ENCODE measurements at regions of chr1 and their contacts with region 1.

Region 1: DNA sequence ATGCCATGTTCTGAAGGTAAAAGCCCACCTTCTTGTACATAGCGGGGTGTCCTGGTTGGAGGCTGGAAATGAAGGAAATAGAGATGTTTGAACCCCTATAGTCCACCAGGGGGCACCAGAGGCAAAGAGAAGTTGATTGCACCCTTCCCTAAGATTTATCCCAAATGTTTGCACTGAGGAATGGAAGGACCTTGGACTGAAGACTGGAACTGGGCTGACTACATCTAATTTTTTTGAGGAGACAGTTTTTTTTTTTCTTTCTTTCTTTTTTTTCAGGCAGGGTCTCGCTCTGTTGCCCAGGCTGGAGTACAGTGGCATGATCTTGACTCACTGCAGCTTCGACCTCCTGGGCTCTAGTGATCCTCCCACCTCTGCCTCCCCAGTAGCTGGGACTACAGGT is 55.3 kb upstream of the EIF4G3 start:
- DNase-seq: peak in 1 of 2 experiments; percentile 27
- H3K4me3 ChIP-seq: no peak overlapping the region
- H3K27ac ChIP-seq: no peak overlapping the region
- H3K4me1 ChIP-seq: no peaks in the 10 kb centered on the region
- H3K27me3 ChIP-seq: no peaks in the 10 kb centered on the region
- CTCF ChIP-seq: peak; percentile 79

Region 2: DNA sequence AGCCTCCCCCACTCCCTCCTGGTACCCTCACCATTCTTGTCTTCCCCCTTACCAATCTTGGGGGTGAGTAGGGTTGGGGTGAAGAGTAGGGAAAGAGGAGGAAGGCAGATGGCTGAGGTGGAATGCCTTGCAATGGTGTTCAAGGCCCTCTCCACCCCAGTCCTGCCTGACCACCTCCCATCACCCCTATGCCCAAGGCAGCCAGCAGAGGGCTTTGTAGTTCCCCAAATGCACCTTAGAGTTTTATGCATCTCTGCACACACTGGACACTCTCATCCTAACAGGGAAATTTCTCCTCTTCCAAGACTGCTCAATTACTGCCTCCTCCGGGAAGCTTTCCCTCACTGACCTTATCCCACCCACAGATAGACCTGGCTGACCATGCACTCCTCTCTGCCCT is 529.6 kb before region 1 on chr1:
- CTCF ChIA-PET with region 1: no interaction called
- POLR2A ChIA-PET with region 1: no interaction called
- intact Hi-C with region 1: no loop called
- DNase-seq: no peak
- H3K4me3 ChIP-seq: no peak overlapping the region
- H3K27ac ChIP-seq: no peak overlapping the region
- H3K4me1 ChIP-seq: 0 out of 2 replicates have a peak, but pooled peaks cover under 1% of the 10 kb centered on the region
- H3K27me3 ChIP-seq: no peaks in the 10 kb centered on the region
- CTCF ChIP-seq: peak; percentile 36; the same call in 1 of the 2 replicates

Region 3: DNA sequence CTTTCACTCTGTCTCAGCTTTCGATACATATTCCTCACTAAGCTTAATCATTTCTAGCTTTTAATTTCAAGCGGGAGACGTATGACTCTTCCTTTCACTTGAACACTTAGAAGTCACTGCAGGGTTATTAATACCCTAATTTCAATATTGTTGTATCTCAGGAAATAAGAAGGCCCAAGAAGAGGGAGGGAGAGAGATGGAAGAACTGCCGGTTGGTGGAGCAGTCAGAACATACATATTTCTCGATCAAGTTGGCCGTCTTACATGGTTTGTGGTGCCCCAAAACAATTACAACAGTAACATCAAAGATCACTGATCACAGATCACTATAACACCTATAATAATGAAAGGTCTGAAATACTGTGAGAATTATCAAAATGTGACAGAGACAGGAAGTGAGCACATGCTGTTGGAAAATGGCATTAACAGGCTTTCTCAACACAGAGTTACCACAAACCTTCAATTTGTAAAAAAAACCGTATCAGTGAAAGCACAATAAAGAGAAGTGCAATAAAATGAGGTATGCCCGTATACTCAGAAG is 299.5 kb before region 1 on chr1:
- CTCF ChIA-PET with region 1: no interaction called
- POLR2A ChIA-PET with region 1: no interaction called
- intact Hi-C with region 1: no loop called
- DNase-seq: no peak
- H3K4me3 ChIP-seq: no peak overlapping the region
- H3K27ac ChIP-seq: no peak overlapping the region
- H3K4me1 ChIP-seq: no peaks in the 10 kb centered on the region
- H3K27me3 ChIP-seq: no peaks in the 10 kb centered on the region
- CTCF ChIP-seq: no peak

Region 4: GRCh38 chr1:21255278-21255942 is 23.4 kb after region 1 on chr1:
- CTCF ChIA-PET with region 1: interaction called, 11 read pairs
- POLR2A ChIA-PET with region 1: no interaction called
- intact Hi-C with region 1: no loop called
- DNase-seq: peak; percentile 42 to 75
- H3K4me3 ChIP-seq: no peak overlapping the region
- H3K27ac ChIP-seq: no peak overlapping the region
- H3K4me1 ChIP-seq: peaks cover 20% of the 10 kb centered on the region
- H3K27me3 ChIP-seq: no peaks in the 10 kb centered on the region
- CTCF ChIP-seq: peak; percentile 77

Region 5: DNA sequence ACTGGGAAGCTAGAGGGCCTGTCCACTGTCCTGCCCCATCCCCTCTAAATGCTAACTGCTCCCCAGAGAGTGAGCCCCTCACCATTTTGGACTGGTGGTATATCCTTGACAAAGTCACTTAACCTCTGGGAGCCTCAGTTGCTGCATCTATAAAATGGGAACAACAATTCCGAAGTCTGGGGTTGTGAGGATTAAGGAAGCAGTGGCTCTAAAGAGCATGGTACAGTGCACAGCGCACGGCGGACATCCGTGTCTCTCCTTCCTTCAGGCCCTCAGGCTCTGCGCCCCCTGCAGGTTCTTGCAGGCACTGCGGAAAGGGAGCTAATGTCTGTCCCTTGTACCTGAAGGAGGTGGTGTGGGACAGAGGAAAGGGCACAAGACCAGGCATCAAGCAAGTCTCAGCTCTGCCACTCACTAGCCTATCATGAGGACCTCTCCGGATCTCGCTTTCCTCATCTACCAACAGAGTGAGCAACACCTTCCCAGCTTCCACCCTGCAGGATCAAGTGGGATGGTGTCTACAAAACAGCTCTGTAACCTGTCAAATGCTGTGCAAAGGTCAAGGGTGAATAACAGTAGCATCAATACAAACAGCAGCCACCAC is 38.1 kb after region 1 on chr1:
- CTCF ChIA-PET with region 1: interaction called, 12 read pairs
- POLR2A ChIA-PET with region 1: no interaction called
- intact Hi-C with region 1: no loop called
- DNase-seq: peak in 1 of 2 experiments; percentile 46
- H3K4me3 ChIP-seq: no peak overlapping the region
- H3K27ac ChIP-seq: no peak overlapping the region
- H3K4me1 ChIP-seq: no peaks in the 10 kb centered on the region
- H3K27me3 ChIP-seq: no peaks in the 10 kb centered on the region
- CTCF ChIP-seq: peak; percentile 85